Activated CD4-positive, alpha-beta memory T cell treated with anti-CD3 and anti-CD28 coated beads for 36 hours (primary cell): ENCODE measurements at regions of chr7 and their contacts with region 1.

Region 1: DNA sequence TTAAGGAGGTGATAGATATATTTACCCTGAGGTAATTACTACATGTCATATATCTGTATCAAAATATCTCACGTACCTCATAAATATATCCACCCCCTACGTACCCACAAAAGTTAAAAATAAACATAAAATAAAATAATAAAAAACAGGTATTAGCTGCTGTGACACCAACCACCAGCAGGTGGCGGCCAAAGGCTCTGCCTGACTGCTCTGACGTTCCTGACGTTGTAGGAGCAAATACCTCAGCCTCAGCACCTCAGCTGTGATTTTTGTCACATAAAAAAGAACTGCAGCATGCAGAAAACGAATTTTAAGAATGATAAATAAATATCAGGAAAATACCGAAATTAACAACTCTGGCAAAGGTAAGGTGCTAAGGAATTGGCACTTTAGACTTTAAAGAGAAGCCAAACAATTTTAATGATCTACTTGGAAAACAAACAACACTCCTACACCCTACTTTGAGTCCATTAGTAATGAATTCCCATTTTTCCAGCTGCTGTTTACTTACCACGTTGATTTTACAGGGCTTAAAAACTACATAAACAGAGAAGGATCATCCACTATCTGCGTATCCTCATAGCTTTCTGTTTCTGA is 125.4 kb upstream of the TARP start:
- DNase-seq: peak; percentile 52
- H3K4me3 Mint-ChIP-seq: no peak overlapping the region
- H3K27ac Mint-ChIP-seq: no peak overlapping the region
- H3K4me1 Mint-ChIP-seq: no peaks in the 10 kb centered on the region
- H3K27me3 Mint-ChIP-seq: peaks cover 8% of the 10 kb centered on the region

Region 2: DNA sequence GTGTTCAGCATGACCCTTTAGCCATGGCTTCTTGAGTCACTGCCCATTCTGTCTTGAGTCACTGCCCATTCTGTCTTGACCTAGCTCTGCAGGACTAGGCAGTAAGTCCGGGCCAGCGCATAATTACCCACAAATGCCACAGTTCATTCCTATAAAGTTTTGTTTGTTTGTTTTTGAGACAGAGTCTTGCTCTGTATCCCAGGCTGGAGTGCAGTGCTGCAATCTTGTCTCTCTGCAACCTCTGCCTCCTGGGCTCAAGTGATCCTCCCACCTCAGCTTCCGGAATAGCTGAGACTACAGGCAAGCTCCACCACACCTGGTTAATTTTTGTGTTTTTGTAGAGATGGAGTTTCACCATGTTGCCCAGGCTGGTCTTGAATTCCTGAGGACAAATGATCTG is 92.7 kb before region 1 on chr7:
- CTCF ChIA-PET with region 1: no interaction called
- POLR2A ChIA-PET with region 1: no interaction called
- intact Hi-C with region 1: no loop called
- DNase-seq: no peak
- H3K4me3 Mint-ChIP-seq: no peak overlapping the region
- H3K27ac Mint-ChIP-seq: no peak overlapping the region
- H3K4me1 Mint-ChIP-seq: peaks cover 10% of the 10 kb centered on the region
- H3K27me3 Mint-ChIP-seq: no peaks in the 10 kb centered on the region

Region 3: GRCh38 chr7:38383281-38383680 is 15.5 kb before region 1 on chr7:
- CTCF ChIA-PET with region 1: interaction called, 14 read pairs
- POLR2A ChIA-PET with region 1: no interaction called
- intact Hi-C with region 1: no loop called
- DNase-seq: no peak
- H3K4me3 Mint-ChIP-seq: no peak overlapping the region
- H3K27ac Mint-ChIP-seq: no peak overlapping the region
- H3K4me1 Mint-ChIP-seq: no peaks in the 10 kb centered on the region
- H3K27me3 Mint-ChIP-seq: no peaks in the 10 kb centered on the region

Region 4: DNA sequence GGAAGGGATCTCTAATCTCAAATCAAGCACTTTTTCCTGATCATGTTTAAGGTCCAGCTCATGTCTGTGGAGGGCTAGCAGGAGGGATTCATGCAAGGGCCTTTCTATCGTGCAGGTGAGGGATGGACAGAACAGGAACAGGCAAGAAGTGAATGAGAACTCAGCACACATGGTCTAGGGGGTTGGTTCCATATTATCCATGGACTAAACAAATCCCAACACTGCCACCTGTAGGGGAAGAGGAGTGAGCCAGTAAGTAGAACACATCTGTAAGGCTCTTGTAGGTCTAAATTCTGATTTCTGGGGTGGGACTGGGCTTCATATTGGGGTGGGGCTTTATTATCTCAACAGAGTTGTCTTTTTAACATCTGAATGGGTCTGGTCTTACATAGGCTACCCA is 12.6 kb after region 1 on chr7:
- CTCF ChIA-PET with region 1: interaction called, 10 read pairs
- POLR2A ChIA-PET with region 1: no interaction called
- intact Hi-C with region 1: no loop called
- DNase-seq: no peak
- H3K4me3 Mint-ChIP-seq: no peak overlapping the region
- H3K27ac Mint-ChIP-seq: no peak overlapping the region
- H3K4me1 Mint-ChIP-seq: peaks cover 14% of the 10 kb centered on the region
- H3K27me3 Mint-ChIP-seq: peaks cover 5% of the 10 kb centered on the region

Region 5: DNA sequence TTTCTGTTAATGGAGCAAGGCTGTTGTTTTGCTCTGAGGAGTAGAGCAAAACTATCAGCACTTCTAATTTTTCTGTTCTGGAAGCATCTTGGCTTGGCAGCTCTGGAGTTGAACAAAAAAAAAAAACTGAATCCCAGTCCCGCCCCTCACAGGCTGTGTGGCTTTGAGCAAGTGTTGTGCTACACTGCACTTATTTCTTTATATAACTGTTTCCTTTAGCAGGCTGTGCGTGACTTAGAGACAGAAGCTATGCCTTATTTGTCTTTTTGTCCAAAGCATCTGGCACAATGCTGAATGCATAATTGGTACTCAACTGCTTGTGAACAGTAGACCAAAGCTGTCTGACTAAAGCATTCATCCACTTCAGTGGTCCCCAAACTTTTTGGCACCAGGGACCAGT is 136.2 kb after region 1 on chr7:
- CTCF ChIA-PET with region 1: no interaction called
- POLR2A ChIA-PET with region 1: no interaction called
- intact Hi-C with region 1: loop called (anchors 10 kb)
- DNase-seq: no peak
- H3K4me3 Mint-ChIP-seq: no peak overlapping the region
- H3K27ac Mint-ChIP-seq: no peak overlapping the region
- H3K4me1 Mint-ChIP-seq: peaks cover 6% of the 10 kb centered on the region
- H3K27me3 Mint-ChIP-seq: peaks cover 5% of the 10 kb centered on the region

Region 6: GRCh38 chr7:38630720-38631673 is 232.2 kb after region 1 on chr7 and contains the start of gene AMPH:
- CTCF ChIA-PET with region 1: interaction called, 12 read pairs
- POLR2A ChIA-PET with region 1: no interaction called
- intact Hi-C with region 1: no loop called
- DNase-seq: peak; percentile 38
- H3K4me3 Mint-ChIP-seq: peak within 1 kb of the TSS; percentile 57
- H3K27ac Mint-ChIP-seq: no peak within 1 kb of the TSS
- H3K4me1 Mint-ChIP-seq: no peaks in the 10 kb centered on the region
- H3K27me3 Mint-ChIP-seq: peaks cover 52% of the 10 kb centered on the region
- total RNA-seq, gene AMPH: not detected

Region 7: GRCh38 chr7:38660427-38661099 is 261.7 kb after region 1 on chr7:
- CTCF ChIA-PET with region 1: interaction called, 57 read pairs
- POLR2A ChIA-PET with region 1: no interaction called
- intact Hi-C with region 1: loop called (anchors 1 kb)
- DNase-seq: peak; percentile 34
- H3K4me3 Mint-ChIP-seq: no peak overlapping the region
- H3K27ac Mint-ChIP-seq: no peak overlapping the region
- H3K4me1 Mint-ChIP-seq: no peaks in the 10 kb centered on the region
- H3K27me3 Mint-ChIP-seq: peaks cover 10% of the 10 kb centered on the region